ENCODE measurements at regions of chr6 and their contacts with region 1.

Region 1: DNA sequence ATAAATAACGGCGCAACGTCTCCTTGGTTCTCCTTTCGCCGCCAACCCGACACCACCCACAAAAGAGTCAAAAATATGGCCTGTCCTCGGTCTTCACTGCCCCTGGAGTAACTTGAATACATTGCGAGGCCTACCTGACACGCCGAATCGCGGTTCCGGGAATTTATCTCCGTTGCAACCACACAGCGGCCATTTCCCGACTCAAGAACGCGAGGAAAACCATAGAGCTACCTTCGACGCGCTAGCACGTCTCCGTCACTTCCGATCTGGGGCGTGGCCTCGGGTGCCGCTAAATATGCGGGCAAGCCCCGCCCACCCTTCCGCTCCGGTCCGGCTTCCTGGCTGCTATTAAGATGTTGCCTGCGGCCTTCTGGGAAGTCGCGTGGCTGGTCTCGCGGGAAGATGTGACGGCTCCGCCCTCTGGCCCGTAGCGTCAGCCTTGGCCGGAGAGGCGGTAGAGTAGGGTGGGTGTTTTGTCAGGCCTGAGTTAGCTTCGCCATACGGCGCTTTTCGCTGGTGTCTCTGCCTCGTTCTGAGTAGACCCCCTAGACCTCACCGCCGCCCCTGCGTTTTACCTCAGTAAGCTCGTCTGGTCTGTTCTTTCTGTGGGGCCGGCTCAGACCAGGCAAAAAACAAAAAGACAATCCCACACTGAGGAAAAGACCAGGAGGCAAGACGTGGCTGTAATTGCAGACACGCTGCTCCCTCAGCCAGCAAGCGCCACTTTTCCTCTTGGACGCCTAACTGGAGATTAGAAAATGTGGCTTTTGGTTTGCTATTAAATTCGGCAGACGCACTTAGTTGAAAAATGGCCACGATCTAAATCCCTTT is at the start of gene BCLAF1:
- DNase-seq: peak; percentile 98 to 100 (median 100)
- ATAC-seq: peak; percentile 77 to 83 (median 82)
- H3K4me3 ChIP-seq: peak within 1 kb of the TSS; percentile 86 to 94
- H3K4me3 Mint-ChIP-seq: peak within 1 kb of the TSS; percentile 95 to 100 (median 98)
- H3K27ac ChIP-seq: peak within 1 kb of the TSS; percentile 99
- H3K27ac Mint-ChIP-seq: peak within 1 kb of the TSS; percentile 100
- H3K4me1 ChIP-seq: peaks cover 34 to 48% of the 10 kb centered on the region in 2 experiments
- H3K4me1 Mint-ChIP-seq: peaks cover 49 to 69% (median 57%) of the 10 kb centered on the region in 3 donors
- H3K27me3 ChIP-seq: no peaks in the 10 kb centered on the region
- H3K27me3 Mint-ChIP-seq: no peaks in the 10 kb centered on the region
- total RNA-seq, gene BCLAF1: 155 to 435 (median 171) TPM

Region 2: GRCh38 chr6:135497412-135498269 is 792.2 kb before region 1 on chr6 and contains the start of gene AHI1:
- CTCF ChIA-PET with region 1: interaction called, 3 read pairs
- POLR2A ChIA-PET with region 1: interaction called, 5 to 74 read pairs
- DNase-seq: peak; percentile 59 to 95 (median 83)
- ATAC-seq: peak; percentile 82 to 89 (median 85)
- H3K4me3 ChIP-seq: peak within 1 kb of the TSS; percentile 79 to 83
- H3K4me3 Mint-ChIP-seq: no peak within 1 kb of the TSS
- H3K27ac ChIP-seq: peak within 1 kb of the TSS; percentile 92
- H3K27ac Mint-ChIP-seq: no peak within 1 kb of the TSS
- H3K4me1 ChIP-seq: peaks cover 0 to 3% of the 10 kb centered on the region in 2 experiments
- H3K4me1 Mint-ChIP-seq: peaks cover 11 to 16% (median 13%) of the 10 kb centered on the region in 3 donors
- H3K27me3 ChIP-seq: no peaks in the 10 kb centered on the region
- H3K27me3 Mint-ChIP-seq: no peaks in the 10 kb centered on the region
- total RNA-seq, gene AHI1: 9.6 to 27.6 (median 15.8) TPM

Region 3: GRCh38 chr6:135819665-135820064 is 470.1 kb before region 1 on chr6:
- CTCF ChIA-PET with region 1: no interaction called
- POLR2A ChIA-PET with region 1: no interaction called
- DNase-seq: no peak
- ATAC-seq: no peak
- H3K4me3 ChIP-seq: no peak overlapping the region
- H3K4me3 Mint-ChIP-seq: no peak overlapping the region
- H3K27ac ChIP-seq: no peak overlapping the region
- H3K27ac Mint-ChIP-seq: no peak overlapping the region
- H3K4me1 ChIP-seq: no peaks in the 10 kb centered on the region
- H3K4me1 Mint-ChIP-seq: no peaks in the 10 kb centered on the region
- H3K27me3 ChIP-seq: no peaks in the 10 kb centered on the region
- H3K27me3 Mint-ChIP-seq: peaks cover 0 to 2% of the 10 kb centered on the region in 2 donors

Region 4: GRCh38 chr6:136249811-136250685 is 39.7 kb before region 1 on chr6 and contains the start of gene MTFR2:
- CTCF ChIA-PET with region 1: interaction called, 4 to 7 read pairs
- POLR2A ChIA-PET with region 1: interaction called, 6 to 99 read pairs
- DNase-seq: peak; percentile 79 to 98 (median 92)
- ATAC-seq: peak; percentile 88 to 97 (median 95)
- H3K4me3 ChIP-seq: peak within 1 kb of the TSS; percentile 64 to 97
- H3K4me3 Mint-ChIP-seq: peak within 1 kb of the TSS; percentile 92 to 97 (median 95)
- H3K27ac ChIP-seq: no peak within 1 kb of the TSS
- H3K27ac Mint-ChIP-seq: peak within 1 kb of the TSS; percentile 34 to 86
- H3K4me1 ChIP-seq: peaks cover 10 to 11% of the 10 kb centered on the region in 2 experiments
- H3K4me1 Mint-ChIP-seq: peaks cover 39 to 47% (median 40%) of the 10 kb centered on the region in 3 donors
- H3K27me3 ChIP-seq: no peaks in the 10 kb centered on the region
- H3K27me3 Mint-ChIP-seq: no peaks in the 10 kb centered on the region
- total RNA-seq, gene MTFR2: 1.2 to 1.8 (median 1.3) TPM

Region 5: GRCh38 chr6:136274062-136274461 is 15.7 kb before region 1 on chr6:
- CTCF ChIA-PET with region 1: interaction called in 1 of 2 experiments, 8 read pairs
- POLR2A ChIA-PET with region 1: interaction called, 6 to 21 read pairs
- DNase-seq: no peak
- ATAC-seq: no peak
- H3K4me3 ChIP-seq: no peak overlapping the region
- H3K4me3 Mint-ChIP-seq: no peak overlapping the region
- H3K27ac ChIP-seq: no peak overlapping the region
- H3K27ac Mint-ChIP-seq: no peak overlapping the region
- H3K4me1 ChIP-seq: no peaks in the 10 kb centered on the region
- H3K4me1 Mint-ChIP-seq: peaks cover 53 to 54% (median 53%) of the 10 kb centered on the region in 3 donors
- H3K27me3 ChIP-seq: no peaks in the 10 kb centered on the region
- H3K27me3 Mint-ChIP-seq: no peaks in the 10 kb centered on the region

Region 6: DNA sequence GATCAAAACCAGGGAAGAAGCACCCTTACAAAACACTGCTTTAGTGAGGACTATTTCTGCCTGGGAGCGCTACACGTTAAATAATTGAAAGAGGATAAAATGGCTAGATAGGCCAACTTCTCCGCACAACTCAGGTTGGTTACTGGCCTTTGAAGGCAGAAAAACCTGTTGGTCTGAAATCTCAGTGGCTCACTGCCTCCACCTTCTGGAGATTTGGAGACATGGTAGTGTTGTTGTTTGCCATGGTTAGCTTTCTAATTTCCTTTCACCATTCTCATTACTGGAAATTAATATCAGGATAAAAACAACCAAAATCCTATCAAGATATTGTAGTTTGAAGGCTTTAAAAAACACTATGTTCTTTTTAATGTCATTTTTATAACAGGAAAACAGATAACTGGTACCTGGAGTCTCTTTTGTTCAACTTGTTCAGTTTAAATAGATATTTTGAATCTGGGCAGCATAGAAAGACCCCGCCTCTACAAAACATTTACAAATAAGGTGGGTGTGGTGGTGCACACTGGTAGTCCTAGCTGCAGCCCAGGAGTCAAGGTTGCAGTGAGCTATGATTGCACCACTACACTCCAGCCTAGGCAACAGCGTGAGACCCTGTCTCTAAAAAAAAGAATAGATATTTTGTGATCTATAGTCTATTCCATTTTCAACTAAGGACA is 27.4 kb after region 1 on chr6:
- CTCF ChIA-PET with region 1: interaction called in 1 of 2 experiments, 8 read pairs
- POLR2A ChIA-PET with region 1: interaction called, 3 to 22 read pairs
- DNase-seq: peak; percentile 25 to 86 (median 59)
- ATAC-seq: peak; percentile 67 to 91 (median 84)
- H3K4me3 ChIP-seq: no peak overlapping the region
- H3K4me3 Mint-ChIP-seq: no peak overlapping the region
- H3K27ac ChIP-seq: no peak overlapping the region
- H3K27ac Mint-ChIP-seq: no peak overlapping the region
- H3K4me1 ChIP-seq: no peaks in the 10 kb centered on the region
- H3K4me1 Mint-ChIP-seq: peaks cover 0 to 3% (median 2%) of the 10 kb centered on the region in 3 donors
- H3K27me3 ChIP-seq: no peaks in the 10 kb centered on the region
- H3K27me3 Mint-ChIP-seq: peaks cover 4 to 5% of the 10 kb centered on the region in 2 donors